ENCODE measurements at regions of chr7 and their contacts with region 1.

Region 1: DNA sequence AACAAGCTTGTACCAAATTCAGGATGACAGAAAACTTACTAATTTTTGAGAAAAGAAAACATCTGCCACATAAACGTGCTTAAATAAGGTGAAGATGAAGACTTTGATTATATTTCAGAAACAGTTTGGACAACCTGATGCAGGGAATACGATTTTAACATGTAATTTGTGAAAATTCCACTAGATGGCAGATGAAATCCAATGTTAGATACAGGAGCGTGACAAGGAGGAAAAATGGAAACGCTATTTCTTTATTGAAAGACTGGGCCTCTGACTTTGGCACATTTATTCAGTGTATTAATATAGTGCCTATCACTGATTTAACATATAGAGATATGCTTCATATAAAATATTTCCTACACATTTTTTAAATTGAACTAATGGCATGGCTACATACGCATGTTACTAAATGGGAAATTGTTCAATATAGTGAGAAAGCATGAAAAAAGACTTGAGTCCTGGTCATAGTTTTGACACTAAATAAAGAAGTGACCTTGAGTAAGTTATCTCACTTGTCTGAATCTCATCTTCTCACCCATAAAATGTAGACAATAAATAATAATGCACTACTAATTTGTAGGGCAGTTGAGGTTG is 60.7 kb downstream of the CD36 start:
- DNase-seq: no peak
- H3K4me3 ChIP-seq: no peak overlapping the region
- H3K27ac ChIP-seq: peak overlapping the region in 1 of 4 donors; percentile 45
- H3K4me1 ChIP-seq: peaks cover 0 to 11% (median 4%) of the 10 kb centered on the region in 4 donors
- H3K27me3 ChIP-seq: no peaks in the 10 kb centered on the region
- CTCF ChIP-seq: peak; percentile 61 to 83 (median 68)
- EP300 ChIP-seq: no peak
- POLR2A ChIP-seq: no peak

Region 2: GRCh38 chr7:80732630-80733029 is 33.5 kb after region 1 on chr7:
- in situ Hi-C with region 1: no loop called
- intact Hi-C with region 1: no loop called
- DNase-seq: no peak
- H3K4me3 ChIP-seq: no peak overlapping the region
- H3K27ac ChIP-seq: no peak overlapping the region
- H3K4me1 ChIP-seq: peaks cover 0 to 3% (median 2%) of the 10 kb centered on the region in 4 donors
- H3K27me3 ChIP-seq: no peaks in the 10 kb centered on the region
- CTCF ChIP-seq: no peak
- EP300 ChIP-seq: no peak
- POLR2A ChIP-seq: no peak

Region 3: DNA sequence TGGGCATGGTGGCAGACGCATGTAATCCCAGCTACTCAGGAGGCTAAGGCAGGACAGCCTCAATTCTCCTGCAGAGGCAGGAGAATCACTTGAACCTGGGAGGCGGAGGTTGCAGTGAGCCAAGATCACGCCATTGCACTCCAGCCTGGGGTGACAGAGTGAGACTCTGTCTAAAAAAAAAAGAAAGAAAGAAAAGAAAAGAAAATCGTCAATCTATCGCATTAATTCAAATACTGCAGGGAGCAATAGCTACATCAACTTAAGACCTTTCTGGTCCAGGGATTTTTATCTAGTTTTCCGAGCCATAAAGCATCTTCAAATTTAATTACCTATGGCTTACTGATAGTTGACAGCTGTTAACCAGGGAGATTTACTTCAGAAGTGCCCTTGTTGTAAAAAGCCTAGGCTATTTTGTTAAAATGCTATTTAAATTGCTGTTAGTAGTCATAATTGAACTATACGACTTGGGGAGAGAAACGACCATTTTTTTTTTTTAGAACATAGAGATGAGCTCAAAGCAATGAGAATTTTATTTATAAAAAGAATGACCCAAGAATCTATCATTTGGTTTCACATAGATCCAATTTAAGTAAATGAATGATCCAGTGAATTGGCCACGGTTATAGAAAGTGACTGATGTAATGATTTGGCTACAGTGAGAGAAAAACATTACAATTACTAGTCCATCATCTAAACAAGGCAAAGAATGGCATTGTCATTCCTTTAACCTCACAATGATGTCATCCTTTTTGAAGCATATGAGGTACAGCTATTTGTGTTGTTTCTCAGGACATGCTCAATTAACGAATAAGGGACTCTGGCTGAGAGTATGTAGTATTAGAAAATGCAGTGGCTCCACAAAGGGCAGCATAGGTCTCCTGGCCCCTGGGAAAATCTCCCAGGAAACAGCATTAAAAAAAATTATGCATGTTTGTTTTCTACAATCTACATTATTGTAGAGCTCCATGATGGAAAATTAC is 134.4 kb after region 1 on chr7:
- in situ Hi-C with region 1: no loop called
- intact Hi-C with region 1: no loop called
- DNase-seq: no peak
- H3K4me3 ChIP-seq: no peak overlapping the region
- H3K27ac ChIP-seq: peak overlapping the region in 1 of 4 donors; percentile 16
- H3K4me1 ChIP-seq: peaks cover 0 to 26% (median 7%) of the 10 kb centered on the region in 4 donors
- H3K27me3 ChIP-seq: no peaks in the 10 kb centered on the region
- CTCF ChIP-seq: no peak
- EP300 ChIP-seq: no peak
- POLR2A ChIP-seq: no peak

Region 4: DNA sequence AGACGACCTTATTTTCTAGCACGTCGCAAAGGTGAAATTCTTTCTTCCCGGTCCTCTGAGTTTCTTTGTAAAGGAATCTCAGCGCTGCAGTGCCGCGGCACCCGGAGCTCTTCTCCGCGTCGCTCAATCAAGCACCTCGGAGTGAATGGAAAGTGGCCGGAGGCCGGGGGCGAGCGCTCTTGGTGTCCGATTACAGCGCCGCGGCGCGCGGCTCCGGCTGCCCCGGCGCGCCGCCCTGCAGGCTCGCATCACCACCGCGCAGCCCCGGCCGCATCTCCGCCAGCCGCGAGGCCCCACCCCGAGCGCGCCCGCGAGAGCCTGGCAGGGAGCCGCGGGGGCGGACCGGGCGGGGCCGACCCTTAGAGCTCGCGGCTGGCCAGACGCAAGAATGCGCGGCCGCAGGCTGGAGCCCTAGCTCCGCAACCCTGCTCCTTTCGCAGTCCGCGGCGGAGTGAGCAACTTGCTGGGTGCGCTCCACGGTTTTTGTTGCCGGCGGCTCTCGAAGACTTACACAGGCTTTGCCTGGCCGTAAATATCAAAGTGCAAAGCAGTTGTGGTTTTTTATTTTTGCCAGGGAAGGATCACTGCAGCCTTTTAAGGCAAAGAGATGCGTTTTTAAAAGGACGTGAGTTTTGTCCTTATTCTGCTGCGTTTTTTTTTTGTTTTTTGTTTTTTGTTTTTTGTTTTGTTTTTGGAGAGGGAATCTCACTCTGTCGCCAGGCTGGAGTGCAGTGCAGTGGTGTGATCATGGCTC is 219.9 kb after region 1 on chr7 and contains the start of gene SEMA3C:
- in situ Hi-C with region 1: loop called in 3 of 4 experiments (anchors 25 kb)
- intact Hi-C with region 1: loop called (anchors 10 kb)
- DNase-seq: peak; percentile 90
- H3K4me3 ChIP-seq: peak within 1 kb of the TSS; percentile 45 to 75 (median 67)
- H3K27ac ChIP-seq: peak within 1 kb of the TSS; percentile 85 to 90 (median 89)
- H3K4me1 ChIP-seq: peaks cover 5 to 58% (median 24%) of the 10 kb centered on the region in 4 donors
- H3K27me3 ChIP-seq: no peaks in the 10 kb centered on the region
- CTCF ChIP-seq: peak in 1 of 5 experiments; percentile 13
- EP300 ChIP-seq: no peak
- POLR2A ChIP-seq: peak; percentile 86
- total RNA-seq, gene SEMA3C: 34.0 to 83.8 (median 79.9) TPM

Region 5: GRCh38 chr7:81256991-81257390 is 557.8 kb after region 1 on chr7:
- in situ Hi-C with region 1: loop called in 1 of 4 experiments (anchors 25 kb)
- intact Hi-C with region 1: no loop called
- DNase-seq: no peak
- H3K4me3 ChIP-seq: no peak overlapping the region
- H3K27ac ChIP-seq: no peak overlapping the region
- H3K4me1 ChIP-seq: no peaks in the 10 kb centered on the region
- H3K27me3 ChIP-seq: no peaks in the 10 kb centered on the region
- CTCF ChIP-seq: peak in 1 of 5 experiments; percentile 19
- EP300 ChIP-seq: no peak
- POLR2A ChIP-seq: no peak

Region 6: GRCh38 chr7:81469869-81470723 is 771.0 kb after region 1 on chr7:
- in situ Hi-C with region 1: loop called (anchors 5 to 25 kb)
- intact Hi-C with region 1: loop called (anchors 10 kb)
- DNase-seq: peak; percentile 82
- H3K4me3 ChIP-seq: no peak overlapping the region
- H3K27ac ChIP-seq: peak overlapping the region in 3 of 4 donors; percentile 66 to 75 (median 69)
- H3K4me1 ChIP-seq: peaks cover 0 to 24% (median 15%) of the 10 kb centered on the region in 4 donors
- H3K27me3 ChIP-seq: no peaks in the 10 kb centered on the region
- CTCF ChIP-seq: peak; percentile 54 to 73 (median 60)
- EP300 ChIP-seq: no peak
- POLR2A ChIP-seq: no peak

Measured in transverse colon (tissue), 4 donors.